Mammary epithelial cell (primary cell): ENCODE measurements at regions of chr18 and their contacts with region 1.

Region 1: DNA sequence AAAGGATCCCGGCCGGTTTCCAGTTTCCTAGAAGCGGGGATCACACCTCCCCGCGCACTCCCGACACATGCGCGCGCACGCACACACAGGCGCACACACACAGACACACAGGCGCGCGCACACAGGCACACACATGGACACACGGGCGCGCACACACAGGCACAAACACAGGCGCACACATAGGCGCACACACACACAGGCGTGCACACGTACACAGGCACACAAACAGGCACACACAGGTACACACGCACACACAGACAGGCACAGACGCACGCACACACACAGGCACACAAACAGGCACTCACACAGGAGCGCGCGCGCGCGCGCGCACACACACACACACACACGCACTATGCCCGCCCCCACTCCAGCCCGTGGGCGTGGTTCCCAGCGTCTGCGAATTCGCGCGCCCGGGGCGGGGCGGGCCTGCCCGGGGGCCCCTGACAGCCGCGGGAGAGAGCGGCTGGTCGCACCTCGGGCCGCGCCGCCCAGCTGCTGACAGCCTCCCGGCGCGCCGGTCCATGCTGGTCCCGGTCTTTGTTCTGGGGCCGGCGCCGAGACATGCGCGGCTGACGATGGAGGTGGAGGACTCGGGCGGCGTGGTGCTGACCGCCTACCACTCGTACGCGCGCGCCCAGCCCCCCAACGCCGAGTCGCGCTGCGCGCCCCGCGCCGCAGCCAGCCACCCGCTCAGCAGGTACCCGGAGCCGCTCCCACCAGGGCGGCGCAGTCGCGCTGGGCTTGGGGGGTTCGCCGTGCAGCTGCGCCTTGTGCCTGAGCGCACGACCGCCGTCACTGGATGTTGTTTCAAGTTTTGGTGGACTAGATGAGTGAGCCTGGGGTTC is at the start of gene ARHGAP28:
- DNase-seq: peak; percentile 89
- H3K4me3 ChIP-seq: peak within 1 kb of the TSS; percentile 52 to 62 (median 55)
- H3K27ac ChIP-seq: no peak within 1 kb of the TSS
- H3K4me1 ChIP-seq: peaks cover 16% of the 10 kb centered on the region
- H3K27me3 ChIP-seq: no peaks in the 10 kb centered on the region
- CTCF ChIP-seq: peak in 1 of 2 donors; percentile 34
- total RNA-seq, gene ARHGAP28: 0.38 to 9.0 TPM

Region 2: DNA sequence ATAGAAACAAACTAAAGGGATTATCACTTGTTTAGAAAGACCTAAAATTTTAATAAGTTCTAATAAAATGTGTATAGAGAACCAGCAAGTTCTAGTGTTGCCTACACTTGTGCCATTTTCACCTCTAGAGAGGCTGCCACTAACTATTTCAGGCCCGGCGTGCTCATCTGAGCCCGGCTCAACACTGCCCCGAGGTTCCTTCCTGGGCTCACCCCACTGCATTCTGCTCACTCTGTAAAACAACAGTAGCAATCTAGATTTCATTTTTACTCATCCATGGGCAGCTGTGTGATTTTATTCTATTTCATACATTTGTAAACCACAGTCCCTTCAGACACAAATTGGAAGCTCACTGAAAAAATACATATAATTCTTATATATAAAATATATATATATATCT is 567.9 kb before region 1 on chr18:
- CTCF ChIA-PET with region 1: no interaction called
- dilution Hi-C with region 1: no loop called
- in situ Hi-C with region 1: no loop called
- intact Hi-C with region 1: no loop called
- DNase-seq: no peak
- H3K4me3 ChIP-seq: no peak overlapping the region
- H3K27ac ChIP-seq: no peak overlapping the region
- H3K4me1 ChIP-seq: no peaks in the 10 kb centered on the region
- H3K27me3 ChIP-seq: no peaks in the 10 kb centered on the region
- CTCF ChIP-seq: no peak

Region 3: DNA sequence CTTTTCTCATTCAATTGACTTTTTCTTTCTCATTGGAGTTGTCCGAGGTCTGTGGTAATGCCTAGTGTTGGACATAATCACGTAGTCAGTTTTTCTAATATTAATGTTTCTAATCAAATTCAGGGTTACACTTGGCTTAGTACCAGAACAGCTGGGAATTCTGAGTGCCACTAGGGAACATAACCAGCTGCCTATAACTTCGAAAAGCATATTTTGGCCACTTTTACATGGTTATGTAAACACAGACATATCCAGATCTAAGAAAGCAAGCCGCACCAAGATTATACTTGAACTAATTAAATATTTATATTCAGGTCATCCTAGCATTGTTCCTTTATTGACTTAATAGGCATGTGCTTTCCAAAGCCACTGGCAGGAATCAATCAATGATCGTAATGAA is 91.0 kb before region 1 on chr18:
- CTCF ChIA-PET with region 1: no interaction called
- dilution Hi-C with region 1: no loop called
- in situ Hi-C with region 1: no loop called
- intact Hi-C with region 1: no loop called
- DNase-seq: no peak
- H3K4me3 ChIP-seq: no peak overlapping the region
- H3K27ac ChIP-seq: no peak overlapping the region
- H3K4me1 ChIP-seq: no peaks in the 10 kb centered on the region
- H3K27me3 ChIP-seq: no peaks in the 10 kb centered on the region
- CTCF ChIP-seq: no peak

Region 4: DNA sequence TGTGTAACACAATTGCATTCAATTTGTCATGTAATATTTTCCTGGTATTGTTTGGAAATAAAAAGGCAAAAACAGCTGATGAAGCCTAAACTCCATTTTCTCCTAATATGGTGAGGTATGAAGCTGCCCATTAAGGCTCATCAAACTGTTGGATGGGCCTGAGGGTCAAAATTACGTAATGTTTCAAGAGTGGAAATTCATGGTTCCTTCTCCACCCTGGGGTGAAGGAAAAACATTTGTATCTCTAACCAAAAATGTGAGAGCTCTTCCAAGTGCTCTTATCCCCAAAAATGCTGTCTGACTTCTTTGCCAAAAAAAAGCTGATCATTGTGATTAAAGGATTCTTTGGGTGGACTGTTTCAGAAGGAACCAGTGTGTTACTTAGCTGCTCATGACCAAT is 91.9 kb after region 1 on chr18:
- CTCF ChIA-PET with region 1: no interaction called
- dilution Hi-C with region 1: no loop called
- in situ Hi-C with region 1: no loop called
- intact Hi-C with region 1: no loop called
- DNase-seq: no peak
- H3K4me3 ChIP-seq: no peak overlapping the region
- H3K27ac ChIP-seq: no peak overlapping the region
- H3K4me1 ChIP-seq: no peaks in the 10 kb centered on the region
- H3K27me3 ChIP-seq: no peaks in the 10 kb centered on the region
- CTCF ChIP-seq: no peak

Region 5: DNA sequence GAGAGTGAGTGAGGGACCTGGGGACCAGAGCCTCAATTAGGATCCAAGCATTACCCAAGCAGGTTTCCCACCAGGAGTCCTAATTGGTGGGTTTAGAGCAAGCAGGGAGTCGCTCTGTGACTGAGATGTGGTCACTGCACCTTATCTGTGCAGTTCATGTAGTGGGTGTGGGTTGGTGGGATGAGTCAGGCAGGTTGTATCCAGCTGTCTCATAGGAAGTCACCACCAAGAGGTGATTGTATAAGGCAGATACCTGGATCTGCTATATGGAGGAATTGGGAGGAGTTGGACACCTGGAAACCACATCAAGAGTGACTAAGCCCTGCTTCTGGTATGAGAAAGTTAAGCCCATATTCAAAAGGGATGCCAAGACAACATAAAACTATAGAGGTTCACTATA is 106.9 kb after region 1 on chr18:
- CTCF ChIA-PET with region 1: no interaction called
- dilution Hi-C with region 1: no loop called
- in situ Hi-C with region 1: no loop called
- intact Hi-C with region 1: loop called (anchors 2 kb)
- DNase-seq: peak; percentile 95
- H3K4me3 ChIP-seq: no peak overlapping the region
- H3K27ac ChIP-seq: no peak overlapping the region
- H3K4me1 ChIP-seq: peaks cover 12% of the 10 kb centered on the region
- H3K27me3 ChIP-seq: no peaks in the 10 kb centered on the region
- CTCF ChIP-seq: no peak

Region 6: DNA sequence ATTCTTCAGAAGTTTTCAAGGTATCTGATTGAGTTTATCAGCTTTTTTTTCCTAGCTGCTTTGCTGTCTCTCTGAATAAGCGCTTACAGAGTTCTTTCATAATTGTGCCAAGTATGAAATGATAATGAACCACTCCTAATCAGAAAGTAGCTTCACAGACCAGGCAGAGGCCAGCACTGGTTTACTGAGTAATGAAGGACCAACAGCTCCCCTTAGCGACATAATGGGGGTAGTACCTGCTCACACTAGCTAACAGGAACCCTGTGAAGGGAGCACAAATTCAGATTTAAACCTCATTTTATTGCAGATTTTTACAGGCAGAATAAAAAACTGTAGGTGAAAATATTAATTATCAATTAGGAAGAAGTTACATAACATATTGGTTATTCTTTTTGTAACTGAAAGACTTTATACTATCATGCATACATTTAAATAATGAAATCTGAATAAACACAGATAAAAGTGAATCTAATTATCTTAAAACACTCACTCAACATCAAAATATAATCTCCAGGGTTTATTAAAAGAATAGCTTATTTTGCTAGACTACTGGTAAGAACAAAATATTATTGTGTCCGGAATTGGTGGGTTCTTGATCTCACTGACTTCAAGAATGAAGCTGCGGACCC is 447.8 kb after region 1 on chr18:
- CTCF ChIA-PET with region 1: no interaction called
- dilution Hi-C with region 1: no loop called
- in situ Hi-C with region 1: no loop called
- intact Hi-C with region 1: no loop called
- DNase-seq: peak; percentile 72
- H3K4me3 ChIP-seq: no peak overlapping the region
- H3K27ac ChIP-seq: no peak overlapping the region
- H3K4me1 ChIP-seq: no peaks in the 10 kb centered on the region
- H3K27me3 ChIP-seq: no peaks in the 10 kb centered on the region
- CTCF ChIP-seq: peak; percentile 87 to 91